PC-9 (cell line): ENCODE measurements at regions of chr2 and their contacts with region 1.

Region 1: DNA sequence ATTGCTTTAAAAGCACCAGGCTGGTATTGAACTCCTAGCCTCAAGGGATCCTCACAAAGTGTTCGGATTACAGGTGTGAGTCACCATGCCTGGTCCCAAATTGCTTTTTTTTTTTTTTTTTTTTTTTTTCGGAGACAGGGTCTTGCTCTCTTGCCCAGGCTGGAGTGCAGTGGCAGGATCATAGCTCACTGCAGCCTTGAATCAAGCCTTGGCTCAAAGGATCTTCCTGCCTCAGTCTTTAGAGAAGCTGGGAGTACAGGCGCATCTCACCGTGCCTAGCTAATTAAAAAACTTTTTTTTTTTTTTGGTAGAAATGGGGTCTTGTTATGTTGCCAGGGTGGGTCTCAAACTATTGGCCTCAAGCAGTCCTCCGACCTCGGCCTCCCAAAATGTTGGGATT is 12.8 kb downstream of the MTA3 start:
- DNase-seq: no peak
- H3K4me3 ChIP-seq: no peak overlapping the region
- H3K27ac ChIP-seq: no peak overlapping the region
- H3K4me1 ChIP-seq: peaks cover 26% of the 10 kb centered on the region
- H3K27me3 ChIP-seq: no peaks in the 10 kb centered on the region
- CTCF ChIP-seq: no peak

Region 2: DNA sequence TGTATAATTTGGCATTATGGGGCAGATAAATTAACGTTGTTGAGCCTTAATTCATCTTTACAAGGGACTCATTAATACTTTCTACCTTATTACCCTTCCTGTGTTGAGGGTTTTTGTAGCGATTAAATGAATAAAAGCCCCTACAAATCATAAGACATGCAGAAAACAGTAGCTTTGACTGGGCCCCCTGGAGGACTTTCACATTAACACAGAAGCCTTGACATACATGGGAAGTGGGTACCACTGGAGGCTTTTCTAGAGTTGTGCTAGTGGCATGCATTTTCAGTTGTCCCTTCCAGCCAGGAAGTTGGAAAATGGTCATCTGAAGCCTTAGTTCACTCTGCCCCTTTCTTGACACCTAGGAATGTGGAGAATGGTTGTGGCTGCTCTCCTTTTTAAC is 17.4 kb after region 1 on chr2:
- CTCF ChIA-PET with region 1: interaction called, 13 read pairs
- POLR2A ChIA-PET with region 1: no interaction called
- intact Hi-C with region 1: no loop called
- DNase-seq: no peak
- H3K4me3 ChIP-seq: no peak overlapping the region
- H3K27ac ChIP-seq: 0 out of 2 replicates have a peak overlapping the region, but pooled peaks have one; percentile 3
- H3K4me1 ChIP-seq: 0 out of 2 replicates have a peak, but pooled peaks cover 4% of the 10 kb centered on the region
- H3K27me3 ChIP-seq: no peaks in the 10 kb centered on the region
- CTCF ChIP-seq: no peak; the same call in 1 of the 2 replicates

Region 3: DNA sequence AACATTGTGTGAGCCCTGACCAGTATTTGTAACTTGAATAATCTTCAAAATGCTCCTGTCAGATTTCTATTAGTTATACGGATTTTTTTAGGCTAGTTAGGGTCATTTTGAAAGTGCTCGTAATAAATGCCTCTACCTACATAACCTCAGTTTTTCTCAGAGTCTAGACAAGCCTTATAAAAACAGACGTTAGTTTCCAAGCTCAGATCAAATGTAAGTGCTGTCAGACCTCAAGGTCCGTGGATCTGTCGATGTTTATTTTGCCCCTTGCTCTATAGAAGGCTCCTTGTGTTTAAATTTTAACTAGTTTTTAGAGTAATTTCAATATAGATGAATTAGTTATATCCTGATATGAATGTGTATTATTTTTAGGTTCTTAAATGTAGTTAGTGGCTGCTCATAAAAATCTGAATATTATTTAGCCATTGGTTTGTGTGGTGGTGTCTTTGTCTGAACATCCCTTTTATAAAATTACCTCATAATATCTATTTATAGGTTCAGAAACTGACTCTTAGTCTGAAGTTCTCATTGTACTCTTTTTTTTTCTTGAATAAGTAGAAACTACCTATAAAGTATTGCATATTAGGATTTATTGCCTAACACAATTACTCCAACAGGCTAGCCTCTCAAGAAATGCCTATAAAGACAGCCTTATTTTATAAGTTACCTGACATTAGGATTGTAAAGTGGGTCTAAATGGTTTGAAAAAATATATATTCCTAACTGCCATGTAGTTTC is 58.3 kb after region 1 on chr2:
- CTCF ChIA-PET with region 1: no interaction called
- POLR2A ChIA-PET with region 1: no interaction called
- intact Hi-C with region 1: no loop called
- DNase-seq: no peak
- H3K4me3 ChIP-seq: no peak overlapping the region
- H3K27ac ChIP-seq: no peak overlapping the region
- H3K4me1 ChIP-seq: no peaks in the 10 kb centered on the region
- H3K27me3 ChIP-seq: no peaks in the 10 kb centered on the region
- CTCF ChIP-seq: no peak